ENCODE measurements at regions of chr10 and their contacts with region 1.

Region 1: GRCh38 chr10:23694446-23694920 is 255.6 kb downstream of the OTUD1 start:
- DNase-seq: peak; percentile 16
- ATAC-seq: peak; percentile 12
- H3K4me3 Mint-ChIP-seq: peak overlapping the region; percentile 36
- H3K27ac Mint-ChIP-seq: no peak overlapping the region
- H3K4me1 Mint-ChIP-seq: peaks cover 17% of the 10 kb centered on the region
- H3K27me3 Mint-ChIP-seq: peaks cover 47% of the 10 kb centered on the region

Region 2: GRCh38 chr10:23199768-23200511 is 494.5 kb before region 1 on chr10:
- CTCF ChIA-PET with region 1: no interaction called
- POLR2A ChIA-PET with region 1: no interaction called
- intact Hi-C with region 1: loop called in 1 of 2 experiments (anchors 5 kb)
- DNase-seq: no peak
- ATAC-seq: no peak
- H3K4me3 Mint-ChIP-seq: no peak overlapping the region
- H3K27ac Mint-ChIP-seq: no peak overlapping the region
- H3K4me1 Mint-ChIP-seq: peaks cover 4% of the 10 kb centered on the region
- H3K27me3 Mint-ChIP-seq: peaks cover 79% of the 10 kb centered on the region

Region 3: DNA sequence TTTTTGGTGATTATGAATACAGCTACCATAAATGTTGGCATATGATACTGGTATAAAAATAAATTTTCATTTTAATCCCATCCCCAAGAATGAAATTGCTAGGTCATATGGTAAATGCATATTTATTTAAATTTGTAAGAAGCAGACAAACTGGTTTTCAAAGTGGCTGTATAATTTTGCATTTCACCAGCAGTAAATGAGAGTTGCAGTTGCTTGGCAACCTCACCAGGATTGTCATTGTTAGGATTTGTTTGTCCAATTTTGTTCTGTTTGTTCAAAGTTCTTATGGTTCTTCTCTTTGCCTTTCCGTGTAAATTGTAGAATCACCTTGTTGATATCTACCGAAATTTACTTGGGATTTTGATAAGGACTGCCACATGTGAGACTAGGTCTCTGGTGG is 18.2 kb before region 1 on chr10:
- CTCF ChIA-PET with region 1: no interaction called
- POLR2A ChIA-PET with region 1: no interaction called
- intact Hi-C with region 1: no loop called
- DNase-seq: no peak
- ATAC-seq: no peak
- H3K4me3 Mint-ChIP-seq: no peak overlapping the region
- H3K27ac Mint-ChIP-seq: no peak overlapping the region
- H3K4me1 Mint-ChIP-seq: no peaks in the 10 kb centered on the region
- H3K27me3 Mint-ChIP-seq: peaks cover 19% of the 10 kb centered on the region

Measured in activated CD4-positive, alpha-beta T cell treated with anti-CD3 and anti-CD28 coated beads for 36 hours (primary cell).